Activated T-helper 1 cell treated with anti-CD3 and anti-CD28 coated beads, Interleukin-12 subunit alpha, Interleukin-12 subunit beta, Interleukin-2, Interleukin-4 antibody, amounts not matched to agents 30 ng/mL and 10 ng/mL and 1 ng/mL, durations not matched to agents 14 hours and 24 hours and 36 hours (primary cell): ENCODE measurements at regions of chr1 and their contacts with region 1.

Region 1: GRCh38 chr1:35192853-35193664 is at the start of gene SFPQ:
- DNase-seq: peak; percentile 96
- H3K4me3 Mint-ChIP-seq: peak within 1 kb of the TSS; percentile 94
- H3K27ac Mint-ChIP-seq: peak within 1 kb of the TSS; percentile 97
- H3K4me1 Mint-ChIP-seq: peaks cover 39% of the 10 kb centered on the region
- H3K27me3 Mint-ChIP-seq: peaks cover 3% of the 10 kb centered on the region
- total RNA-seq, gene SFPQ: 398 and 404 TPM in 2 replicates

Region 2: GRCh38 chr1:33753087-33753856 is 1439.8 kb before region 1 on chr1:
- intact Hi-C with region 1: no loop called
- DNase-seq: no peak
- H3K4me3 Mint-ChIP-seq: no peak overlapping the region
- H3K27ac Mint-ChIP-seq: no peak overlapping the region
- H3K4me1 Mint-ChIP-seq: no peaks in the 10 kb centered on the region
- H3K27me3 Mint-ChIP-seq: peaks cover 8% of the 10 kb centered on the region

Region 3: GRCh38 chr1:34786521-34787325 is 406.3 kb before region 1 on chr1:
- intact Hi-C with region 1: loop called (anchors 5 kb)
- DNase-seq: peak; percentile 47
- H3K4me3 Mint-ChIP-seq: no peak overlapping the region
- H3K27ac Mint-ChIP-seq: no peak overlapping the region
- H3K4me1 Mint-ChIP-seq: peaks cover 25% of the 10 kb centered on the region
- H3K27me3 Mint-ChIP-seq: peaks cover 29% of the 10 kb centered on the region

Region 4: DNA sequence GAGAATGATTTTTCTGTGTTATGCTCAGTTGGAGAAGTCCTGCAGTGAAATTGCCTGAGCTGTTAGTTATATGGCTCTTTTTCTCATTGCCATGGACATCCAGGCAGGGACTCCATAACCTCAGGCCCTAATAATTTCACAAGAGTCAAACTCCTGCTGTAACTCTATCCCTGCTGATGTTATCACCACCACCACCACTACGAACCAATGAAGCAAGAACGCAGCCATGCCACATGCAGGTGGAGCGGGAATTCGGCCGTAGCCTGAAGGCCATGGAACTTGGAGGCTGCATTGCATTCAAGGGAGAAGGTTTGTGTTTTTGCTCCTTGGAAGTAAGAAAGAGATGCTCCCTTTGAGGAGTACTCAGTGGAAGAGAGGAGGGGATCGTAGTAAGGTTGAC is 246.8 kb before region 1 on chr1:
- intact Hi-C with region 1: no loop called
- DNase-seq: no peak
- H3K4me3 Mint-ChIP-seq: no peak overlapping the region
- H3K27ac Mint-ChIP-seq: no peak overlapping the region
- H3K4me1 Mint-ChIP-seq: no peaks in the 10 kb centered on the region
- H3K27me3 Mint-ChIP-seq: peaks cover 25% of the 10 kb centered on the region

Region 5: GRCh38 chr1:35030756-35031446 is 162.2 kb before region 1 on chr1:
- intact Hi-C with region 1: loop called (anchors 1 kb)
- DNase-seq: peak; percentile 27
- H3K4me3 Mint-ChIP-seq: peak overlapping the region; percentile 98
- H3K27ac Mint-ChIP-seq: peak overlapping the region; percentile 97
- H3K4me1 Mint-ChIP-seq: peaks cover 35% of the 10 kb centered on the region
- H3K27me3 Mint-ChIP-seq: no peaks in the 10 kb centered on the region

Region 6: DNA sequence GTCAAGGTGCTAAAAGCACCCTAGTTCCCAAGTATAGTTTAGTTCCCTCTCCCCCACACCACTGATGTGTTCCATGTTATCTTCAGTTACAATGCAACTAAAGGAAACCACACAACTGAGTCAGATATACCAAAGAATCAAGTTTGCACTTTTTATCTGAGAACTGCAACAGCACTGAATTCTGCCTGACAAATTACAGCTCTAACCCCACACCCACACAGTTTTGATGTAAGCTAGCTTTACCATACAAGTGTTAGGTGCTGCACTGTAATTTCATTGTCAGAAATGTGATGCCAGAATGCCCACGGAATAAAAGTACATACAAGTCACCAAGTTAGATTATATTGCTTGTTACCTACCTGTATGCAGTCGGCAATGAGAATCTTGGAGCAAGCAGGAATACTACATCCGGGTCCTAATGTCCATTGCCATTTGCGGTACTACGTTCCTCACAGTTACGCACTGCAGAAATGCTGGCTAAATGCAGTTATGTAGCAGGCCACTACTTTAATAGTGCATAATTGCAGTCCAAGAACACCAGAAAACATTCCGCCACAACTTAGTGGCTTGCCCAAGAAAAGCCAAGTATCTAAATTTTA is 12.2 kb before region 1 on chr1:
- intact Hi-C with region 1: loop called (anchors 1 kb)
- DNase-seq: no peak
- H3K4me3 Mint-ChIP-seq: peak overlapping the region; percentile 6
- H3K27ac Mint-ChIP-seq: peak overlapping the region; percentile 61
- H3K4me1 Mint-ChIP-seq: peaks cover 68% of the 10 kb centered on the region
- H3K27me3 Mint-ChIP-seq: no peaks in the 10 kb centered on the region

Region 7: GRCh38 chr1:35505908-35506798 is 313.1 kb after region 1 on chr1:
- intact Hi-C with region 1: loop called (anchors 5 kb)
- DNase-seq: peak; percentile 70
- H3K4me3 Mint-ChIP-seq: peak overlapping the region; percentile 69
- H3K27ac Mint-ChIP-seq: peak overlapping the region; percentile 94
- H3K4me1 Mint-ChIP-seq: peaks cover 76% of the 10 kb centered on the region
- H3K27me3 Mint-ChIP-seq: no peaks in the 10 kb centered on the region

Region 8: DNA sequence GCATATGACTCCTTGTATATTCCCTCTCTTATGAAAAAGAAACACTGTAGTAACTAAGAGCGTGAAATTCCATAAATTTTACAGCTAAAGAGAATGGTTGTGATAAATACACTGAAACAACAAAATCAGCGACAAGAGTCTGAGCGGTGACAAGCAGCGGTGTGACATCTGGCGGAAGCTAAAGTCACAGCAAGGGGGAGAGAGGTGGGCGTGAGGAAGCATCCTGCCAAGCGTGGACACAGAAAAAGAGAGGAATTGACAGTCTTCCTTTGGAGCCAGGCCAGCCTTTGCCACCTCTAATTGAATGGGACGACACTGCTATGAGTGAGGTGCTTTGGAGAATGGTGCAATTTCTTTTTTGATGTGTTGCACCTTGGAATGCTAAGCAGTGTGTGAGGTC is 422.4 kb after region 1 on chr1:
- intact Hi-C with region 1: no loop called
- DNase-seq: no peak
- H3K4me3 Mint-ChIP-seq: no peak overlapping the region
- H3K27ac Mint-ChIP-seq: no peak overlapping the region
- H3K4me1 Mint-ChIP-seq: peaks cover 42% of the 10 kb centered on the region
- H3K27me3 Mint-ChIP-seq: no peaks in the 10 kb centered on the region

Region 9: GRCh38 chr1:35641233-35641866 is 448.3 kb after region 1 on chr1 and contains the start of gene PSMB2:
- intact Hi-C with region 1: loop called (anchors 2 kb)
- DNase-seq: peak; percentile 95
- H3K4me3 Mint-ChIP-seq: peak within 1 kb of the TSS; percentile 99
- H3K27ac Mint-ChIP-seq: peak within 1 kb of the TSS; percentile 99
- H3K4me1 Mint-ChIP-seq: peaks cover 40% of the 10 kb centered on the region
- H3K27me3 Mint-ChIP-seq: peaks cover 26% of the 10 kb centered on the region
- total RNA-seq, gene PSMB2: 125 and 126 TPM in 2 replicates

Region 10: DNA sequence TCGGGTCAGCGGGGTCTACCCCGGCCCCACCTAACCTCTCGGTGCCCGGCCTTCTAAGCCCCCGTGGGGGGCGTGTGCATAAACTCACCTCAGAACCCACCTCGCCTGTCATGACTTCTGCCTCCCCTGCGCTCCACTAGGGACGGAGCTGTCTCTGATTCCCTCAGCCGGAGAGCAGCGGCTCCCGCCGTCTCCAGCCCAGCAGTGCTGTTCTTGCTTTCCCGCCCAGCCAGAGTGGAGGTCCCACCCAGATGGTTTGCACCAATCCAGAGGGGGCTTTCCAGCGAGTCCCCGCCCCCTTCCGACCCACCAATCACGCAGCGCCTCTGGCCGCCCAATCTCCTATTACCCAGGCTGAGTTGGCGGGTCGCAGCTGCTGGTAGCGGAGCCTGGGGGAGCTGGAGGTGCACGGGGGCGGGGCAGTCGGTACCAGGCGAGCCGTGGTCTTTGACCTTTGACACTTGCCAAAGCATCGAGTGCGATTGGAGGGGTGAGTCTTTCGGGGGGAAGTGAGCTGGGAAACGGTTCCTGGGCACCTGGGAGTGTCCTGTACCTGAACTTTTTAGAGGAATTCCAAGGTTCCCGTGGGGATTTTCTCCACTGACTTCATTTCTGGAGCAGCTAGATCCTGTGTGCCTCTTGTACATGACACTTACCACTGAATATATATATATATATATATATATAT is 576.8 kb after region 1 on chr1 and contains the start of gene CLSPN:
- intact Hi-C with region 1: loop called (anchors 2 kb)
- DNase-seq: peak; percentile 95
- H3K4me3 Mint-ChIP-seq: peak within 1 kb of the TSS; percentile 100
- H3K27ac Mint-ChIP-seq: peak within 1 kb of the TSS; percentile 98
- H3K4me1 Mint-ChIP-seq: peaks cover 19% of the 10 kb centered on the region
- H3K27me3 Mint-ChIP-seq: no peaks in the 10 kb centered on the region
- total RNA-seq, gene CLSPN: 53.0 and 53.1 TPM in 2 replicates